ENCODE measurements at regions of chr9 and their contacts with region 1.

Region 1: GRCh38 chr9:131178382-131178781 is 53.0 kb downstream of the NUP214 start:
- DNase-seq: peak; percentile 72
- ATAC-seq: peak; percentile 98
- H3K4me3 ChIP-seq: no peak overlapping the region
- H3K27ac ChIP-seq: no peak overlapping the region
- H3K4me1 ChIP-seq: no peaks in the 10 kb centered on the region
- H3K27me3 ChIP-seq: no peaks in the 10 kb centered on the region
- CTCF ChIP-seq: peak; percentile 92

Region 2: GRCh38 chr9:131334629-131335367 is 156.4 kb after region 1 on chr9:
- intact Hi-C with region 1: loop called (anchors 5 kb)
- DNase-seq: peak; percentile 60
- ATAC-seq: no peak
- H3K4me3 ChIP-seq: no peak overlapping the region
- H3K27ac ChIP-seq: no peak overlapping the region
- H3K4me1 ChIP-seq: no peaks in the 10 kb centered on the region
- H3K27me3 ChIP-seq: no peaks in the 10 kb centered on the region
- CTCF ChIP-seq: no peak